ENCODE measurements at regions of chr1 and their contacts with region 1.

Region 1: DNA sequence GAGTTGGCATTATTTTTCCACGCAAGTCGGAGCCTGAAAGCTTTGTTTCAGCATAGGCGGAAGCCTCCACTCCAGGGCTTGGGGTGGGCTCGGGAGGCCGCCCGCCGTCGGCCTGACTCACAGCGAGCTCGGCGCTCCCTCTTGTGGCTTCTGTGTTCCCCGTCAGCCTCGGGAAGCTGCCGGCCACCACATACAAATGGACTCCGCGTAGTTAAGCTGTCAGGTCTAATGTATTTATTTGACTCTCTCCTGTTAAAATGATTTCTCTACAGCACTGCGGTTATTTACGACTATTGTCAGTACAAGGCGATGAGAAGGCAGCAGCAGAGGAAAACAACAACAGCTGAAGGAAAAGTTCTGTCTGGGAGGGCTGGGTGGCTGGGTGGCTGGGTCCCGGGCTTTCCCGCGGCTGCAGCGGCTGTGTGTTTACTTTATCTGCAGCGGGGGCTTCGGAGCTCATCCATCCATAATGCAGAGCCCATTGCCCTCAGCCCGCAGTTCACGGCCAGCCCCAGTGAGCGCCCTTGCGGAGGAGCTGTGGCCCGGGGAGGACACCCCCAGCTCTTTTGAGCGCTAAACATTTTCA is 375.7 kb upstream of the CAMK1G start:
- DNase-seq: peak; percentile 83
- H3K4me3 Mint-ChIP-seq: peak overlapping the region; percentile 62
- H3K27ac Mint-ChIP-seq: no peak overlapping the region
- H3K4me1 Mint-ChIP-seq: no peaks in the 10 kb centered on the region
- H3K27me3 Mint-ChIP-seq: peaks cover 6% of the 10 kb centered on the region
- CTCF ChIP-seq: peak; percentile 98

Region 2: GRCh38 chr1:208485512-208485911 is 722.3 kb before region 1 on chr1:
- CTCF ChIA-PET with region 1: no interaction called
- POLR2A ChIA-PET with region 1: no interaction called
- intact Hi-C with region 1: no loop called
- DNase-seq: no peak
- H3K4me3 Mint-ChIP-seq: no peak overlapping the region
- H3K27ac Mint-ChIP-seq: no peak overlapping the region
- H3K4me1 Mint-ChIP-seq: no peaks in the 10 kb centered on the region
- H3K27me3 Mint-ChIP-seq: no peaks in the 10 kb centered on the region
- CTCF ChIP-seq: no peak

Region 3: DNA sequence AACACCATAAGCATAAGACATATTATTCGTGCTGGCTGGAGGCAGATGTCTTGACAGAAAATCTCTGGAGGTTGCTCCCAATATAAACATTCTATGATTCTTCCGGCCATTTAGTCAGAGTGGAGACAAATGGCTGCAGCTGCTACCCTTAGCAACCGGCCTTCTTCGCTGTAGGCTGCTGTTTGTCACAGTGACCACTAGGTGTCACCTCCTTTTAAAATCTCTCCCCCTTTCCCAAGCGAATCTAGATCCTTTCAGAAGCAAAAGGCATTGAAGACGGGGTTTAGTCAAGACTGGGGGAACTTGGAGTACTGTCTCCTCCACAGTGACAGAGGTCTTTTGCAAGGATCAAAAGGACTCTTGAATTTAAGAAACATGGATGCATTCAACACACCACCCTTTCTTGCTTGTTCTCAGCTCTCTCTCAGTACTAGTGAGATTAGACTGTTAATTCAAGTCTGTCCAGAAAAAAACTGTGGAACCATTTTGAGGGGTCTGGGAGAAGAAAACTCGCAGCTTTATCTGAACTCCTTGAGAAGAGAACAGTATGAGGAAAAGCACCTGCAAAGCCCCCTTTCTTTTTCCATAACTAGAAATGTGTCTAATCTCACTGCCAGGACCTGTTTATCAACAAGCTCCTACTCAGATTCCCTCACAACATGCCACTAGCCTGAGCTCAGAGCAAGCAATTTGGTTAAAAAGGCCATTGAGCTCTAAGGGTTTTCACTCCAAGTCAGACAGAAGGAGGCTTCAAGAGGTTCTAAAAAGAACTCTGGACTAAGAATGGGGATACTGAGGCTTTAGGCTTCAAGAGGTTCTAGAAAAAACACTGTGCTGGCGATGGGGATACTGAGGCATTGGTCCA is 555.3 kb before region 1 on chr1:
- CTCF ChIA-PET with region 1: interaction called, 215 read pairs
- POLR2A ChIA-PET with region 1: interaction called, 3 read pairs
- intact Hi-C with region 1: loop called (anchors 1 kb)
- DNase-seq: peak; percentile 83
- H3K4me3 Mint-ChIP-seq: no peak overlapping the region
- H3K27ac Mint-ChIP-seq: no peak overlapping the region
- H3K4me1 Mint-ChIP-seq: peaks cover 13% of the 10 kb centered on the region
- H3K27me3 Mint-ChIP-seq: peaks cover 21% of the 10 kb centered on the region
- CTCF ChIP-seq: peak; percentile 98

Region 4: GRCh38 chr1:209176866-209177430 is 30.8 kb before region 1 on chr1:
- CTCF ChIA-PET with region 1: interaction called, 32 read pairs
- POLR2A ChIA-PET with region 1: no interaction called
- intact Hi-C with region 1: no loop called
- DNase-seq: no peak
- H3K4me3 Mint-ChIP-seq: no peak overlapping the region
- H3K27ac Mint-ChIP-seq: no peak overlapping the region
- H3K4me1 Mint-ChIP-seq: peaks cover 7% of the 10 kb centered on the region
- H3K27me3 Mint-ChIP-seq: peaks cover 27% of the 10 kb centered on the region
- CTCF ChIP-seq: no peak

Region 5: DNA sequence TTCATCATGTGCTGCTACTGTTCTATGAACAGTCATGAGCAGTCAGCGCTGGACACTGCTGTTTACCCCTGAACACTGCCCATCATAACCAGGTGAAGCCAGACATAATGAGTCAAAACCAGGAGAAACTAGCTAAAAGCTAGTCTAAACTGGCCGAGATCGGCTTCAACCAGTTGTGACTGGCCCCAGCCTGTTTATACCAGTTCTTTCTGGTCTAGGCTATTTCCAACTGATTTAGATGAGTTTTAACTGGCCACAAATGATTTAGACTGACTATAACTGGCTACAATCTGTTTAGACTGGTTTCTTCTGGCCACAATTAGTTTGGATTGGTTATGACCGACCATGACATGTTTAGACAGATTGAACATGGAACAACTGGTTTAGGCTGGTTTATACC is 27.4 kb after region 1 on chr1:
- CTCF ChIA-PET with region 1: interaction called, 49 read pairs
- POLR2A ChIA-PET with region 1: interaction called, 8 read pairs
- intact Hi-C with region 1: no loop called
- DNase-seq: no peak
- H3K4me3 Mint-ChIP-seq: no peak overlapping the region
- H3K27ac Mint-ChIP-seq: no peak overlapping the region
- H3K4me1 Mint-ChIP-seq: no peaks in the 10 kb centered on the region
- H3K27me3 Mint-ChIP-seq: no peaks in the 10 kb centered on the region
- CTCF ChIP-seq: no peak

Region 6: GRCh38 chr1:209342441-209343175 is 134.8 kb after region 1 on chr1:
- CTCF ChIA-PET with region 1: interaction called, 325 read pairs
- POLR2A ChIA-PET with region 1: no interaction called
- intact Hi-C with region 1: no loop called
- DNase-seq: no peak
- H3K4me3 Mint-ChIP-seq: no peak overlapping the region
- H3K27ac Mint-ChIP-seq: no peak overlapping the region
- H3K4me1 Mint-ChIP-seq: no peaks in the 10 kb centered on the region
- H3K27me3 Mint-ChIP-seq: no peaks in the 10 kb centered on the region
- CTCF ChIP-seq: no peak

Region 7: GRCh38 chr1:209490013-209490412 is 282.2 kb after region 1 on chr1:
- CTCF ChIA-PET with region 1: interaction called, 78 read pairs
- POLR2A ChIA-PET with region 1: no interaction called
- intact Hi-C with region 1: loop called (anchors 1 kb)
- DNase-seq: peak; percentile 69
- H3K4me3 Mint-ChIP-seq: no peak overlapping the region
- H3K27ac Mint-ChIP-seq: no peak overlapping the region
- H3K4me1 Mint-ChIP-seq: peaks cover 26% of the 10 kb centered on the region
- H3K27me3 Mint-ChIP-seq: no peaks in the 10 kb centered on the region
- CTCF ChIP-seq: peak; percentile 90

Measured in MCF 10A (cell line).